ENCODE measurements at regions of chr1 and their contacts with region 1.

Region 1: GRCh38 chr1:203331224-203331623 is 19.7 kb downstream of the FMOD start:
- DNase-seq: no peak
- ATAC-seq: no peak
- H3K4me3 ChIP-seq: no peak overlapping the region
- H3K27ac ChIP-seq: no peak overlapping the region
- H3K4me1 ChIP-seq: peaks cover 38% of the 10 kb centered on the region
- H3K27me3 ChIP-seq: no peaks in the 10 kb centered on the region
- CTCF ChIP-seq: no peak
- POLR2A ChIP-seq: no peak

Region 2: DNA sequence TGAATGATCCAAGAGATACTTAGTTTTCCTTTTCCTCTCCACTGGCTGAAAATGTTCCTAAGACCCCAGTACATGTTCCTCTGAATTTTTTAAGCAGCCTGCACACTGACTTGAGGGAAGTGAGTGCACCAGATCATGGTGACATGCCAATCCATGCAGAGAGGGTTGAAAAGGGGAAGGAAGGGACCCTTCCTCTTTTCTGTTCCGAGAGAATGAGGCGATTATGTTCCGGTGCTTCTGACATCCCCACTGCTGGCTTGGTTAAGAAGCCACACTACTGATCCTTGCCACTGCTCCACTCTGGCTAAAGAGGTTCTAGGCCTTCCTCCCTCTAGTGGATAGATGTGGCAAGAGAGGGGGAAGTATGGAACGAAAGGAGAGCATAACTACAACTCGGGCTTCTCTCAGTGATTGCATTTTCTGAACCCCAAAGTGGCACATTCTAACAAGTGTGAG is 362.4 kb before region 1 on chr1:
- intact Hi-C with region 1: no loop called
- DNase-seq: peak; percentile 36 to 80 (median 53)
- ATAC-seq: peak; percentile 49
- H3K4me3 ChIP-seq: no peak overlapping the region
- H3K27ac ChIP-seq: peak overlapping the region in 1 of 4 donors; percentile 85
- H3K4me1 ChIP-seq: peaks cover 33% of the 10 kb centered on the region
- H3K27me3 ChIP-seq: no peaks in the 10 kb centered on the region
- CTCF ChIP-seq: peak; percentile 33 to 74 (median 66)
- POLR2A ChIP-seq: no peak

Region 3: DNA sequence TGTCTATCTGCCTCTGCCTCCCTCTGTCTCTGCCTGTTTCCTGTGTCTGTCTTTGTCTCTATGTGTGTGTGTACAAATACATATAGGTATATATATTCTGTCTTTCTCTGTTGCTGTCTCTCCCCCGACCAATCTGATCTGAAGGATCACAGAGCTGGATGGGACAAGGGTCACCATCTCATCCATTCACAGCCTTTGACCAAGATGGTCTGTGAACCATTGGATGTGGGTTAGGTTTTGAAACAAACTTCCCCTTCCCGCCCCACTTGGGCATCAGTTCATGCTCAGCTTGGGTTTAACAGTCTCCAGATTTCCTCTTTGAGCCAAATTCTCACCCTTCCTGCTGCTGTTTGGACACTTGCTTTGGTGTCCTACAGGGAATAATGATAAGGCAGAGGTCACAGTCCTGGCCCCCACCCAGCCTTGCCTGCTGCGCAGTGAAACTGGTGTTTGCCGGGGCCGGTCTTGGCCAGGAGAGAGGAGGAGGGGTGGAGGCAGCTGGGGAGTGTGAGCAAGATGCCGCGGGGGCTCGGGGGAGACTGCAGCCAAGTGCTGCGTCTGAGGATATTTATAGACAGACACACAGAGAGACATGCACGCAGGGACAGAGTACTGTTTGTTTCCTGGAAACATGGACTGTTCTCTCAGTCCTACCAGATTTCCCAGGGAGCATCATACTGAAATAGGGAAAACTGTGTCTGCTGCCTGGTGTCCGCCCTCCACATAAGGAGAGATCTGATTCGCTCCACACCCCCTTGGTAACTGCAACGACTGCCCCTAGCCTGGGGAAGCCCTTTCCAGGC is 52.9 kb before region 1 on chr1:
- intact Hi-C with region 1: loop called (anchors 5 kb)
- DNase-seq: peak; percentile 73 to 89 (median 86)
- ATAC-seq: peak; percentile 45
- H3K4me3 ChIP-seq: no peak overlapping the region
- H3K27ac ChIP-seq: peak overlapping the region; percentile 42 to 76 (median 62)
- H3K4me1 ChIP-seq: peaks cover 62% of the 10 kb centered on the region
- H3K27me3 ChIP-seq: no peaks in the 10 kb centered on the region
- CTCF ChIP-seq: peak in 1 of 7 experiments; percentile 6
- POLR2A ChIP-seq: peak in 2 of 3 donors; percentile 28 to 36

Measured in body of pancreas (tissue), 4 donors.